ENCODE measurements at regions of chr6 and their contacts with region 1.

Region 1: GRCh38 chr6:28136585-28137504 is 4.8 kb upstream of the ZKSCAN8 start:
- DNase-seq: peak; percentile 85
- H3K4me3 Mint-ChIP-seq: peak overlapping the region; percentile 82
- H3K27ac Mint-ChIP-seq: peak overlapping the region; percentile 92
- H3K4me1 Mint-ChIP-seq: peaks cover 65% of the 10 kb centered on the region
- H3K27me3 Mint-ChIP-seq: no peaks in the 10 kb centered on the region

Region 2: GRCh38 chr6:27838058-27838944 is 298.5 kb before region 1 on chr6:
- CTCF ChIA-PET with region 1: no interaction called
- POLR2A ChIA-PET with region 1: no interaction called
- intact Hi-C with region 1: loop called (anchors 5 kb)
- DNase-seq: peak; percentile 88
- H3K4me3 Mint-ChIP-seq: no peak overlapping the region
- H3K27ac Mint-ChIP-seq: no peak overlapping the region
- H3K4me1 Mint-ChIP-seq: peaks cover 22% of the 10 kb centered on the region
- H3K27me3 Mint-ChIP-seq: peaks cover 6% of the 10 kb centered on the region

Region 3: DNA sequence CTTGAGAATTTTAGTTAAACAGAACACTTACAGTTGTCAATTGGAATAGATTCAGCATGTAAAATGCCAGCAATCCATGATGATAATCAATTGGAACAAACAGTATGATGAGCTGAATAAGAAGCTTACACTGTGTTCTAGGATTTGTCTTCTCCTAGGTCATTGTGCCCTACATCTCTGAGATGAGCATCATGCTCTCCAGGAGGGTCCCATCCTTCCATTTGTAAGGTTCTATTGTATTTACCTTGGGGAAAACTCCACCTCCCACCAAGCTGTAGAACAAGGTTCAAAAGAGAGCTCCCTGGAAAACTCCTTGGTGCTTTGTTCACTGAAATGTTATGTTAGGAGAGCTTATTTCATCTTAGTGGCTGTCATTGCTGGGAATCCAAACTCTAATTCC is 285.4 kb before region 1 on chr6:
- CTCF ChIA-PET with region 1: no interaction called
- POLR2A ChIA-PET with region 1: no interaction called
- intact Hi-C with region 1: no loop called
- DNase-seq: no peak
- H3K4me3 Mint-ChIP-seq: no peak overlapping the region
- H3K27ac Mint-ChIP-seq: no peak overlapping the region
- H3K4me1 Mint-ChIP-seq: no peaks in the 10 kb centered on the region
- H3K27me3 Mint-ChIP-seq: no peaks in the 10 kb centered on the region

Region 4: GRCh38 chr6:28104392-28105244 is 32.2 kb before region 1 on chr6:
- CTCF ChIA-PET with region 1: interaction called, 4 read pairs
- POLR2A ChIA-PET with region 1: interaction called, 8 read pairs
- intact Hi-C with region 1: loop called (anchors 1 kb)
- DNase-seq: peak; percentile 89
- H3K4me3 Mint-ChIP-seq: peak overlapping the region; percentile 80
- H3K27ac Mint-ChIP-seq: peak overlapping the region; percentile 88
- H3K4me1 Mint-ChIP-seq: peaks cover 4% of the 10 kb centered on the region
- H3K27me3 Mint-ChIP-seq: peaks cover 4% of the 10 kb centered on the region

Region 5: GRCh38 chr6:28167068-28167467 is 30.2 kb after region 1 on chr6:
- CTCF ChIA-PET with region 1: no interaction called
- POLR2A ChIA-PET with region 1: no interaction called
- intact Hi-C with region 1: no loop called
- DNase-seq: no peak
- H3K4me3 Mint-ChIP-seq: no peak overlapping the region
- H3K27ac Mint-ChIP-seq: no peak overlapping the region
- H3K4me1 Mint-ChIP-seq: peaks cover 4% of the 10 kb centered on the region
- H3K27me3 Mint-ChIP-seq: peaks cover 2% of the 10 kb centered on the region

Region 6: DNA sequence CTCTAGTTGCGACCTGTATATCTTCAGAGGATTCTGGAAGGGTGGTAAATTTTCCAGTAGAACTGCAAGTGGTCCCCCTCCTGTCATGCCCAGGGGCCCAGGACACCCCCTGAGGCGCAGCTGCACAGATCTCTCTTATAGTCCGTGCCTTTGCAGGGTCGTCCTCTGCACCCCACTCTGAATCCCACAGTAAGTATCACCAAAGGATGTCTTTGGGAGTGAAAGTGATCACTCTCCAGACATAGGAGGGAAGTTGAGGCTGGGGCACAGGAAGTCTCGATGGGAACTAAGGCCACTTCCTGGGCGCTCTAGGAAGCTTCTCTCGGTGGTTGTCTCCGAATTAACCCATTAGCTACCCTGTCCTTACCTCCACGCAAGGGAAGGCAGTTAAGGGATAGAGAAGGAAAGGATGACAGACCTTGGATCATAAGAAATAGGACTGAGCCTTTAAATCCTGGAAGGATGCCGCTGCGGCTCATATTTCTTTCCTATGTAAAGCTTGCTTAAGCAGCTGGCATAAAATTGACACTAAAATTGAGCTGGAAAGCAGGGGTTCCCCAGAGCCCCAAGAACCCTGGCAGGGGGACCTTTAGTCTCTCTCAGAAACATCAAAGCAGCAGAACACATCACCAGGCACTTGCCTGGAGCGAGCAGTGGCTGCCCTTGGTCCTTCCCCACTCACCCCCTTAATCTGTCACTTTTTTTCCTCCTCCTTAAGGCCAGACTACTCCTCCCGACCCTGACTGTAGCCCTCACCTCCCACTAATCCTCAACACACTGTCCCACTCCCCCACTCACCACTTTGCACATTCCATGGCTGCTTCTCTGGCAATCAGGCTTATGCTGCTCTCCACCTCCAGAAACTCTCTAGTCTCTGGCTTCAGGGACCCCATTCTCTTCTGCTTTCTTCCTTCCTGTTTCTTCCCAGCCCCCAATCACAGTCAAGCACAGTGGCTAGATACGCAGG is 115.4 kb after region 1 on chr6 and contains the start of gene ZKSCAN4:
- CTCF ChIA-PET with region 1: no interaction called
- POLR2A ChIA-PET with region 1: interaction called, 7 read pairs
- intact Hi-C with region 1: loop called (anchors 1 kb)
- DNase-seq: peak; percentile 84
- H3K4me3 Mint-ChIP-seq: peak within 1 kb of the TSS; percentile 98
- H3K27ac Mint-ChIP-seq: peak within 1 kb of the TSS; percentile 73
- H3K4me1 Mint-ChIP-seq: peaks cover 17% of the 10 kb centered on the region
- H3K27me3 Mint-ChIP-seq: no peaks in the 10 kb centered on the region
- total RNA-seq, gene ZKSCAN4: 3.7 to 3.8 TPM

Region 7: GRCh38 chr6:28349892-28350737 is 213.3 kb after region 1 on chr6 and contains the start of gene ZKSCAN3:
- CTCF ChIA-PET with region 1: interaction called, 29 read pairs
- POLR2A ChIA-PET with region 1: interaction called, 3 read pairs
- intact Hi-C with region 1: loop called (anchors 2 kb)
- DNase-seq: peak; percentile 94
- H3K4me3 Mint-ChIP-seq: peak within 1 kb of the TSS; percentile 100
- H3K27ac Mint-ChIP-seq: peak within 1 kb of the TSS; percentile 93
- H3K4me1 Mint-ChIP-seq: peaks cover 20% of the 10 kb centered on the region
- H3K27me3 Mint-ChIP-seq: peaks cover 6% of the 10 kb centered on the region
- total RNA-seq, gene ZKSCAN3: 2.2 to 2.7 TPM

Region 8: GRCh38 chr6:28443112-28443773 is 306.4 kb after region 1 on chr6 and contains the start of gene ZSCAN23:
- CTCF ChIA-PET with region 1: no interaction called
- POLR2A ChIA-PET with region 1: no interaction called
- intact Hi-C with region 1: loop called (anchors 5 kb)
- DNase-seq: peak; percentile 92
- H3K4me3 Mint-ChIP-seq: peak within 1 kb of the TSS; percentile 97
- H3K27ac Mint-ChIP-seq: peak within 1 kb of the TSS; percentile 79
- H3K4me1 Mint-ChIP-seq: peaks cover 29% of the 10 kb centered on the region
- H3K27me3 Mint-ChIP-seq: peaks cover 39% of the 10 kb centered on the region
- total RNA-seq, gene ZSCAN23: 0.83 to 1.1 TPM

Measured in activated CD4-positive, alpha-beta memory T cell treated with anti-CD3 and anti-CD28 coated beads for 36 hours (primary cell).